CD4-positive, alpha-beta memory T cell (primary cell): ENCODE measurements at regions of chr4 and their contacts with region 1.

Region 1: DNA sequence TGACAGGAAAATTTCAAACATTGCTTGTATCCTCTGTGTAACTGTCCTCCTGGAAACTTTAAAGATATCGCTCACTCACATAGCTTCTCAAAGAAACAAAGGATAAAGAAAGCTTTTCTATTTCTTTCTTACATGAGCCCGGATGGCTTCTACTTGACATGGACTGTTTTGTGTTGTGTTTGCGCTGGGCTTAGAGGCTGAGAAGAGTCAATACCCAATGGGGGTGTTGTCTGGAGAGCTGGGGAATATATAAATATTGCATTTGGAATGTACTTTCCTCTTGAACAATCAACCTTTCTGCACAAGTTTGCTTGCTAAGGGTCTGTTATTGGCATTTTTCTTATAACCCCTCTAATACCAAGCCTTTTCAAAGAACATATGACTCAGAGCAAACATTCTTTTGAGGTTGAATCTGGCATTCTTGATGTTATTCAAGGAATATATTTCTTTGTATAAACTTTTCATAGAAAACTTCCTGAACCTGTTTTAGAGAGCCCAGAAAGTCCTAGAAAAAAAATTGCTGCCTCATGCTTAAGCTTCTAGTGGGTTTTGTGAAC is 331.9 kb downstream of the PACRGL start:
- DNase-seq: no peak
- H3K4me3 ChIP-seq: no peak overlapping the region
- H3K4me3 Mint-ChIP-seq: no peak overlapping the region
- H3K27ac ChIP-seq: no peak overlapping the region
- H3K27ac Mint-ChIP-seq: no peak overlapping the region
- H3K4me1 ChIP-seq: no peaks in the 10 kb centered on the region
- H3K4me1 Mint-ChIP-seq: no peaks in the 10 kb centered on the region
- H3K27me3 ChIP-seq: no peaks in the 10 kb centered on the region
- H3K27me3 Mint-ChIP-seq: no peaks in the 10 kb centered on the region

Region 2: DNA sequence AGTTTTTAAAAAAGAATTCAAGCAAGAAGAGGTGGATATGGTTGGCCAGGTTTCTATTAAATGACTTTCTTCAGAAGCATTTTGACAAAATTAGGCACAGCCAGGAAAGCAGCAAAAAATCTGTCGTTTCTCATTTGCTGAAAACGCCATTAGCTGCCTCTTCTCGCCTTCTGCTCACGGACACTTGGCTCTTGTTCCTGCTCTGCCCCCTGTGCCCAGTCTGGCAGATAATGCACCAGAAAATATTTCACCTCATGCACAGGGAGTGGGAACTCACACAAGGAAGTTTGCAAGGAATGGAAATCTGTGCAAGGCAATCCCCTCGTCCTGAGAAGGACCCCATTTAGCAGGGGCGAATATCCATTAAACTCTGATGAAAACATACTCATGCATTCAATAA is 71.9 kb before region 1 on chr4:
- CTCF ChIA-PET with region 1: no interaction called
- POLR2A ChIA-PET with region 1: no interaction called
- intact Hi-C with region 1: loop called (anchors 10 kb)
- DNase-seq: no peak
- H3K4me3 ChIP-seq: no peak overlapping the region
- H3K4me3 Mint-ChIP-seq: no peak overlapping the region
- H3K27ac ChIP-seq: no peak overlapping the region
- H3K27ac Mint-ChIP-seq: no peak overlapping the region
- H3K4me1 ChIP-seq: no peaks in the 10 kb centered on the region
- H3K4me1 Mint-ChIP-seq: no peaks in the 10 kb centered on the region
- H3K27me3 ChIP-seq: no peaks in the 10 kb centered on the region
- H3K27me3 Mint-ChIP-seq: no peaks in the 10 kb centered on the region